ENCODE measurements at regions of chr6 and their contacts with region 1.

Region 1: DNA sequence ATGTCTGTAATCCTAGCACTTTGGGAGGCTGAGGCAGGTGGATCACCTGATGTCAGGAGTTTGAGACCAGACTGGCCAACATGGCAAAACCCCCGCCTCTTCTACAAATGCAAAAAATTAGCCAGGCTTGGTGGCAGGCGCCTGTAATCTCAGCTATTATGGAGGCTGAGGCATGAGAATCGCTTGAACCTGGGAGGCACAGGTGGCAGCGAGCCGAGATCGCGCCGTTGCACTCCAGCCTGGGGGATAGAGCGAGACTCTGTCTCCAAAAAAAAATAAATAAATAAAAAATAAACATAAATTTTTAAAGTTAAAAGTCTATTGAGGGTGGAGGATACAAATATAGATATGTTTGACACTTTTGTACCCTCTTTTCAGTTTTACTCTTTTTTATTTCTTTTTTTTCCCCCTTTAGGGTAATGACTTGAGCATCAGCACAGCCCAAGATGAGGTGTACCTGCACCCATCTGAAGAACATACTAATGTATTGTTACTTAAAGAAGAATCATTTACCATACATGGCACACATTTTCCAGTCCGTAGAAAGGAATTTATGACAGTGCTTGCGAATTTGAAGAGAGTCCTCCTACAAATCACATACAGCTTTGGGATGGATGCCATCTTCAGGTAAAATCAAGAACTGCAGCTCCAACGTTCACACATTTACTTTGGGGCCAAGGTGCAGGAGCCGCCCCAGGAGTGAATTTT is 368.9 kb downstream of the LAMA2 start:
- DNase-seq: peak in 34 of 42 donors; percentile 12 to 89 (median 60)

Region 2: GRCh38 chr6:128807577-128807976 is 444.2 kb before region 1 on chr6:
- intact Hi-C with region 1: loop called (anchors 10 kb)
- DNase-seq: no peak

Region 3: GRCh38 chr6:129130959-129131681 is 120.7 kb before region 1 on chr6:
- intact Hi-C with region 1: loop called (anchors 10 kb)
- DNase-seq: peak in 8 of 42 donors; percentile 10 to 54 (median 31)

Region 4: GRCh38 chr6:130655586-130655985 is 1403.8 kb after region 1 on chr6:
- intact Hi-C with region 1: no loop called
- DNase-seq: no peak

Measured in head of caudate nucleus (tissue), 42 donors.